ENCODE measurements at regions of chr5 and their contacts with region 1.

Region 1: DNA sequence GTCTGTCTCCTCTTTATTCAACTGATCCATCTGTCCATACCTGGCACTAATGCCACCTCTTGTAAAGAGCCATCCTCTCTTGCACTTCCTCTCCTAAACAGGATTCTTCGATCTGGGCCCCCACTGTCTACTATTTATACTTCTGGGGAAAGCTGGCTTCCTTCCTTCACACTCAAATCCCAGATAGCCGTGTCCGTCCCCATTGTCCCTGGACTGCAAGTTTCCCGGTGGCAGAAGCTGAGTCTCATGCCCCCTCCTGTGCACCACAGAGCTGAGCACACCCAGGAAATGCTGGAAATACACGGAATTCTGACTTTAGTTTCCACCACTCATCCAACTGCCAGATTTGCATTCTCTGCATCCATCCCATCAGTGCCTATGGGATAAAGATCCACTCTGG is 84.0 kb downstream of the MARCHF11 start:
- DNase-seq: no peak
- H3K4me3 ChIP-seq: no peak overlapping the region
- H3K27ac ChIP-seq: no peak overlapping the region
- H3K4me1 ChIP-seq: no peaks in the 10 kb centered on the region
- H3K27me3 ChIP-seq: no peaks in the 10 kb centered on the region
- CTCF ChIP-seq: no peak
- POLR2A ChIP-seq: no peak

Region 2: DNA sequence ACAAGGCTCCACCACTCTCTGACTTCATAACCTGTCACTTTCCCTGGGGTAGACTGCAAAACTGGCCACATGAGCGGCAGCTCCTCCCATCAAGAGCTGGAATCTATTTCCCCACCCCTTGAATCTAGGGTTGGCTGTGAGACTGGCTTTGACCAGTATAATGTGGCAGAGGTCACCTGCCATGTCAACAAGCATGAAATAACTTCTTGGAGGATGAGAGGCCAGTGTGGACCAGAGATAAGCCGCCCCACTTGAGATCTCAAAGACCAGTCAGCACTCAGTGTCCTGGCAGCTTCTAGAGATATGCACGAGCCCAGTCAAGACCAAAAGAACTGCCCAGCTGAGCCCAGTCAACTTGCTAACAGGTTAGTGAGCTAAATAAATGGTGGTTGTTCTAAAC is 25.0 kb after region 1 on chr5:
- CTCF ChIA-PET with region 1: no interaction called
- POLR2A ChIA-PET with region 1: no interaction called
- dilution Hi-C with region 1: no loop called
- intact Hi-C with region 1: loop called (anchors 1 kb)
- DNase-seq: no peak
- H3K4me3 ChIP-seq: no peak overlapping the region
- H3K27ac ChIP-seq: no peak overlapping the region
- H3K4me1 ChIP-seq: no peaks in the 10 kb centered on the region
- H3K27me3 ChIP-seq: no peaks in the 10 kb centered on the region
- CTCF ChIP-seq: no peak
- POLR2A ChIP-seq: no peak

Measured in endothelial cell of umbilical vein (primary cell).